Endothelial cell of umbilical vein (primary cell): ENCODE measurements at regions of chr17 and their contacts with region 1.

Region 1: DNA sequence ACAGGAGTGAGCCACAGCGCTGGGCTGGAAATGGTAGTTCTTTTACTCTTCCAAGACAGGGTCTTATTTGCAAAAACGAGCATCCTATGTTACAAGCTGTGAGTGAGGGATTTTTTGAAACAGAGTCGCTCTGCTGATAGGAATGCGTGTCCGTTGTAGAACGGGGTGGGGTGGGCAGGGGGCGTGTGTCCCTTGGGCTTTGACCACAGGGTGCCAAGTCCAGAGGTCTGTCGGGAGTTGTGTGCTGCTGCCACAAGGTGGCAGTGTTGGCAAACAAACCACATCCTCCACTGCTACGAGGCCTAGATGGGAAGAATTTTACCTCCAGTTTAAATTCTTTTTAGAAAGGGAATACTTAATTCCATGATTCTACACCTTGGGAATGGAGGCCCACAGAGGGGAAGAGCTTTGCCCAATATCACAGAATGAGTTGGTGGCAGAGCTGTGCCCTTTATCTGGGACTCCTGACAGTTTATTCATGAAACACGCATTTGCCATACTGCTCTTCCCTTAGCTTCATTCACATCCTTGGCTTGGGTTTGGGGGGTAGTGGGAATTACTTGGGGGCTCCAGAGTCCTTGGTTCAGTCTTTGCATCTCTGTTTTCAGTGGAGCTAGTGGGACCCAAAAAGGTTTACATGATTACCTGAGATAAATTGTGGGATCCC is 30.6 kb upstream of the ETV4 start:
- DNase-seq: peak; percentile 81
- H3K4me3 ChIP-seq: no peak overlapping the region
- H3K27ac ChIP-seq: no peak overlapping the region
- H3K4me1 ChIP-seq: peaks cover 19% of the 10 kb centered on the region
- H3K27me3 ChIP-seq: no peaks in the 10 kb centered on the region
- CTCF ChIP-seq: peak; percentile 80 to 83
- POLR2A ChIP-seq: no peak

Region 2: DNA sequence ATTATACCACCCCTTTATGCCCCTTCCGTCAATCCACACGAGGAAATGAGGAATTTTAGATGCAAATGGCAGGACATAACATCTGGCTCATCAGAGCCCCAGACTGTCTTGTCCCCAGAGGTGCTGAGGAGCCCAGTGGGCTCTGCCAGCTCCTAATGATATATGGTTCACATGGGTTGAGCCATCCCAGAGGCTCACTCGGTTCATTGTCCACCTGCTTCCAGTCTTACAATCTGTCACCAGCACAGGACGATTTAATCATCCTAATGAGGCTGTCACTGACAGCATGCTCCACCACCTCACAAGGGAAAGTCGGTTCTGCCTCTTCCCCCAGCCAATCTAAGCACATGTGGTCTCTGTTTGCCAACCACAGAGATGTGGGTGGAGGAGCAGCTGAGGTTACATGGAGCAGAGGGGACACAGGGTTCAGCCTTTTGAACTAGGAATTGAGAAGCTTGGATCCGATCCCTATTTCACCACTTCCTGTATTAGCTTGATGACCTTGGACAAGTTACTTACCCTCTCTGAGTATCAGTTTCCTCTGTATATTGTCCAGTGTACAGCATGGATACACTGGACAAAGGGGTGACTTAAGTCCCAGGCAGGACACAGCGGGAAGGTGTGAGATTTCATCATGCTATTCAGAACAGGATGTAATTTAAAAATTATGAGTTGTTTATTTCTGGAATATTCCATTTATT is 119.9 kb before region 1 on chr17:
- CTCF ChIA-PET with region 1: no interaction called
- POLR2A ChIA-PET with region 1: no interaction called
- dilution Hi-C with region 1: no loop called
- intact Hi-C with region 1: no loop called
- DNase-seq: peak; percentile 42
- H3K4me3 ChIP-seq: no peak overlapping the region
- H3K27ac ChIP-seq: no peak overlapping the region
- H3K4me1 ChIP-seq: peaks cover 5% of the 10 kb centered on the region
- H3K27me3 ChIP-seq: peaks cover 4 to 9% of the 10 kb centered on the region in 2 experiments
- CTCF ChIP-seq: no peak
- POLR2A ChIP-seq: no peak

Region 3: DNA sequence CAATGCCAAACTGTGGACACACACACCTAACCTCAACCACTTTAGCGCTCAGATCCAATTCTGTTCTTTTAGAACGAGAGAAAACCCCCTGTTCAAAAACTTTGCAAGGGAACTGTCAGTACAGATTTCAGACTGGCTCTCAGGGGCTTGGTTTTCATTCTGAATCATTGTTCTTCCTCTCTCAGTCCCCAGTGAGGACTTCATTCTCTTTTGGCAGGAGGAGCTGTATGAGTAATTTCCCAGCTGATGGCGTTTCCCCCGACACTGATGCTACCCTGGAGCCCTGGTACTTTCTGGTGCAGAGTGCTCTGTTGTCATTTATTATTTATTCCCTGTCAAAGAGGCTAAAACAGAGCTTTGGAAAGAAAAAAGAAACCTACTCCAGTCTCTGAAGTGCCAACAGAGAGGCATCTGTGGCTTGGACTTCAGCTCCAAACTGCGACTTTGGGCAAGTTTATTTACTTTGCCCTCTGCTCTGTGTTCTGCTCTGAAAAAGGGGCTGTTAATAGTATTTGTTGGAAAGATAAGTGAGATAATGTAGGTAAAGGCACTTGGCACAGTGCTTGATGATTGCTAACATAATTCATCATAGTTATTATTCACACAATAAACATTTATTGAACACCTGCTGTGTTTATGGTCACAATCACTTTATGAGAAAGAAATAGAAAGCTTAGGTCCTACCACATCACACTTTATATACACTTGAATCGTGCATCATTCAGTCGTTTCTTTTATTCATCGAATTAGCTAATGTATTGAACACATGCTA is 58.9 kb before region 1 on chr17:
- CTCF ChIA-PET with region 1: interaction called, 8 read pairs
- POLR2A ChIA-PET with region 1: no interaction called
- dilution Hi-C with region 1: no loop called
- intact Hi-C with region 1: loop called (anchors 1 kb)
- DNase-seq: peak; percentile 72
- H3K4me3 ChIP-seq: no peak overlapping the region
- H3K27ac ChIP-seq: peak overlapping the region; percentile 71
- H3K4me1 ChIP-seq: peaks cover 22% of the 10 kb centered on the region
- H3K27me3 ChIP-seq: no peaks in the 10 kb centered on the region
- CTCF ChIP-seq: no peak
- POLR2A ChIP-seq: no peak

Region 4: DNA sequence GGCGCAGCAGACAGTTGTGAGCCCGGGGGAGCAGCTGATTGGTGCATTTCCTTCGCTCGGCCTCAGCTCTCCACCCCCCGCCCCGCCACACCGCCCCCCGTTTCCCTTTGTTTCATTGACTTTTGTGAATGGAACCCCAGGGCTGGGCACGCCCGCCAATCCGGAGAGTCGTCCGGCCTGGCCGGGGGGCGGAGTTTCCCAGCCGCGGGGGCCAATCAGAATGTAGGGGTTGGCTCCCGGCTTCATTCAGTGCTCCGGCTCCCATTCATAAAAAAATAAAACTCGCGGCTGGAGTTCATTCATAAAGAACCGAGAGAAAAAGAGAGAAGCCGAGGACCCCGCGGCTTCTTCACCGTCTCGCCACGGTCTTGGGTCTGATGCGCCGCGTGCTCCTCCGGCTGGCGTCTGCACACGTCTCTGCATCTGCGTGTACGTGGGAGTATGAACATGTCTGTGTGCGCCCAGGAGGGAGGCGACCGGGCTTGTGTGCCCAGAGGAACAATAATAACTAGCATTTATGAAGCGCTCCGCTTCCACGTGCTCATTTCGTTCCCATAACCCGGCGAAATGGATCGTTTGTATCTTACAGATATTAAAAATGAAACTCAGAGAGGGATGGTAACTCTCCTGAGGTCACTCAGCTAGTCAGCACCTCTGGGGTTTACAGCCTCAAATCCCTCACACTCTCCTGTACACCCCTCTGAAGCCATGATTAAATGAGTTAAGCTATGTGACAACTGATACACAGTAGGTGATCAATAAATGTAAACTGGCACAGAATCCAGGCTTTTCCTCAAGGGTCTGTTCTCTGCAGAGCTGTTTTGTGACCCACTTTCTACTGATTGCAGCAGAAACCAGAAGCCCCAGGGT is 30.1 kb before region 1 on chr17 and contains the start of gene ETV4:
- CTCF ChIA-PET with region 1: interaction called, 10 read pairs
- POLR2A ChIA-PET with region 1: no interaction called
- dilution Hi-C with region 1: no loop called
- intact Hi-C with region 1: no loop called
- DNase-seq: peak; percentile 95
- H3K4me3 ChIP-seq: peak within 1 kb of the TSS; percentile 28 to 75 (median 56)
- H3K27ac ChIP-seq: peak within 1 kb of the TSS; percentile 90
- H3K4me1 ChIP-seq: peaks cover 23% of the 10 kb centered on the region
- H3K27me3 ChIP-seq: no peaks in the 10 kb centered on the region
- CTCF ChIP-seq: no peak
- POLR2A ChIP-seq: no peak
- total RNA-seq, gene ETV4: 32.2 and 39.4 TPM in 2 replicates

Region 5: GRCh38 chr17:43591779-43592562 is 15.3 kb after region 1 on chr17:
- CTCF ChIA-PET with region 1: interaction called, 43 read pairs
- POLR2A ChIA-PET with region 1: no interaction called
- dilution Hi-C with region 1: no loop called
- intact Hi-C with region 1: loop called (anchors 1 kb)
- DNase-seq: peak; percentile 94
- H3K4me3 ChIP-seq: no peak overlapping the region
- H3K27ac ChIP-seq: peak overlapping the region; percentile 95
- H3K4me1 ChIP-seq: peaks cover 26% of the 10 kb centered on the region
- H3K27me3 ChIP-seq: no peaks in the 10 kb centered on the region
- CTCF ChIP-seq: no peak
- POLR2A ChIP-seq: peak; percentile 62

Region 6: GRCh38 chr17:43760254-43760852 is 183.7 kb after region 1 on chr17:
- CTCF ChIA-PET with region 1: interaction called, 20 read pairs
- POLR2A ChIA-PET with region 1: no interaction called
- dilution Hi-C with region 1: no loop called
- intact Hi-C with region 1: loop called (anchors 1 kb)
- DNase-seq: peak; percentile 93
- H3K4me3 ChIP-seq: no peak overlapping the region
- H3K27ac ChIP-seq: no peak overlapping the region
- H3K4me1 ChIP-seq: peaks cover 2% of the 10 kb centered on the region
- H3K27me3 ChIP-seq: peaks cover 8 to 13% of the 10 kb centered on the region in 2 experiments
- CTCF ChIP-seq: peak; percentile 97 to 100
- POLR2A ChIP-seq: no peak